ENCODE measurements at regions of chr17 and their contacts with region 1.

Region 1: GRCh38 chr17:31433091-31433790 is 41.8 kb downstream of the RAB11FIP4 start:
- DNase-seq: peak; percentile 19 to 76 (median 34)
- ATAC-seq: peak; percentile 92
- H3K4me3 ChIP-seq: no peak overlapping the region
- H3K4me3 Mint-ChIP-seq: peak overlapping the region; percentile 3
- H3K27ac ChIP-seq: no peak overlapping the region
- H3K27ac Mint-ChIP-seq: peak overlapping the region; percentile 11
- H3K4me1 ChIP-seq: peaks cover 30% of the 10 kb centered on the region
- H3K4me1 Mint-ChIP-seq: peaks cover 13% of the 10 kb centered on the region
- H3K27me3 ChIP-seq: peaks cover 0 to 5% of the 10 kb centered on the region in 2 experiments
- H3K27me3 Mint-ChIP-seq: peaks cover 11% of the 10 kb centered on the region
- CTCF ChIP-seq: no peak

Region 2: GRCh38 chr17:31388770-31389661 is 44.2 kb before region 1 on chr17:
- CTCF ChIA-PET with region 1: no interaction called
- POLR2A ChIA-PET with region 1: no interaction called
- intact Hi-C with region 1: loop called in 1 of 2 experiments (anchors 10 kb)
- DNase-seq: peak in 12 of 14 experiments; percentile 13 to 68 (median 42)
- ATAC-seq: peak; percentile 48
- H3K4me3 ChIP-seq: no peak overlapping the region
- H3K4me3 Mint-ChIP-seq: no peak overlapping the region
- H3K27ac ChIP-seq: no peak overlapping the region
- H3K27ac Mint-ChIP-seq: no peak overlapping the region
- H3K4me1 ChIP-seq: peaks cover 16% of the 10 kb centered on the region
- H3K4me1 Mint-ChIP-seq: peaks cover 6% of the 10 kb centered on the region
- H3K27me3 ChIP-seq: peaks cover 25 to 28% of the 10 kb centered on the region in 2 experiments
- H3K27me3 Mint-ChIP-seq: peaks cover 39% of the 10 kb centered on the region
- CTCF ChIP-seq: peak; percentile 65

Region 3: DNA sequence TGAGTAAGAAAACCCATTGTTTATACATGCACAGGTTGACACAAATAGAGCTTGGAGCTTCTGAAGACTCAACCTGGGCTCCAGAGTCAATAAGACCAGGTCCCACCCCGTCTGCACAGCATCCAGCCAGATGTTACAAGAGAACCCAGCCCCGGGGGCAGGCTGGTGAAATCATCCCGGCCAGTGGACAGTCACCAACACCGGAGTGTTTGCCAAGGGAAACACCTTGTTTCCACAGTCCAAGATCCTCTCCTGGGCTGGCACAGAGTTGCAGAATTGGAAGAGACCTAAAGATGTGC is 48.5 kb after region 1 on chr17:
- CTCF ChIA-PET with region 1: interaction called, 4 read pairs
- POLR2A ChIA-PET with region 1: no interaction called
- intact Hi-C with region 1: loop called in 1 of 2 experiments (anchors 5 kb)
- DNase-seq: no peak
- ATAC-seq: no peak
- H3K4me3 ChIP-seq: no peak overlapping the region
- H3K4me3 Mint-ChIP-seq: no peak overlapping the region
- H3K27ac ChIP-seq: no peak overlapping the region
- H3K27ac Mint-ChIP-seq: no peak overlapping the region
- H3K4me1 ChIP-seq: peaks cover 1% of the 10 kb centered on the region
- H3K4me1 Mint-ChIP-seq: peaks cover 3% of the 10 kb centered on the region
- H3K27me3 ChIP-seq: no peaks in the 10 kb centered on the region
- H3K27me3 Mint-ChIP-seq: no peaks in the 10 kb centered on the region
- CTCF ChIP-seq: no peak

Measured in CD4-positive, alpha-beta T cell (primary cell).